Activated B cell treated with CpG ODN at 0.5 μM for 24 hours (primary cell): ENCODE measurements at regions of chr15 and their contacts with region 1.

Region 1: DNA sequence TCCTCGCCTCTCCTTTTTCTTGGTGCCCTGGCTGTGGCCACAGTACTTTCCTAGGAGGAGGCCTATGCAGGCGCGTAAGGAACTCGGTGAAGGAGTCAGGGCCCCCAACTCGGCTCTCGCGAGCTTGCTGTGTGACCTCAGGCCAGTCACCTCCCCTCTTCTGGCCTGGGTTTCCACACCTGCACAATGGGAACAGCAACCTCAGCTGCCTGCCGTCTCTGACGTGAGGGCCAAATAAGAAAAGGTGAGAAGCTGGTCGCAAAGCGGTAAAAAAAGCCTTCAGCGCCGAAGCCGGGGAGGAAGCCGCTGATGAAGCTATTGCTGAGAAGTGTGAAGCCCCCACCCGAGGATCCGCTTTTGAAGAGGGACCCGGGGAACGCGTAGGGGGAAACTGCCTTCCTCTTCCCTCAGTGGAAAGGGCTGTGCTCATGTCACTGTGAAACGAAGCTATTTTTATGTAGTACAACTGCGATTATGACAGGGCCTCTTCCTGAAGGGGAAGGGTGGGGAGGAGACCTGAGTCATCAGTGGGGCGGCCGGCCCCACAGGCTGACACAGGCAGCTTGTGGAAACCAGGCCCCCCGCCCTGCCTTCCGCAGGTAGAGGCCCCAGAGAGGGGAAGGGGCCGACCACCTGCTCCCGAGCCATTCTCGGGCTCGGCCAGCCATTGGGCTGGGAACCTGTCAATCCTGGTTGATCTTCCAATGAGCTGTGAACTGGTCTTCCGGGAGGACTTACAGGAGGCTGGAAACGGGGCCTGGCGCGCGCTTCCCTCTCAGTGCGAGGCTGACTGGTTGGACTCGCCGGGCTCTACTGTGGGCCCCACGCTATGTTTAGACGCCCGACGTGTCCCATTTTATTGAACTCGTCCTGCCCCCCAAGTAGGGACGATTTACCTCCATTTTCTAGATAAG is 18.0 kb upstream of the ANKDD1A start:
- DNase-seq: peak; percentile 90
- ATAC-seq: peak; percentile 72
- H3K4me3 Mint-ChIP-seq: peak overlapping the region; percentile 89
- H3K27ac Mint-ChIP-seq: peak overlapping the region; percentile 99
- H3K4me1 Mint-ChIP-seq: peaks cover 76% of the 10 kb centered on the region
- H3K27me3 Mint-ChIP-seq: no peaks in the 10 kb centered on the region
- CTCF ChIP-seq: no peak

Region 2: DNA sequence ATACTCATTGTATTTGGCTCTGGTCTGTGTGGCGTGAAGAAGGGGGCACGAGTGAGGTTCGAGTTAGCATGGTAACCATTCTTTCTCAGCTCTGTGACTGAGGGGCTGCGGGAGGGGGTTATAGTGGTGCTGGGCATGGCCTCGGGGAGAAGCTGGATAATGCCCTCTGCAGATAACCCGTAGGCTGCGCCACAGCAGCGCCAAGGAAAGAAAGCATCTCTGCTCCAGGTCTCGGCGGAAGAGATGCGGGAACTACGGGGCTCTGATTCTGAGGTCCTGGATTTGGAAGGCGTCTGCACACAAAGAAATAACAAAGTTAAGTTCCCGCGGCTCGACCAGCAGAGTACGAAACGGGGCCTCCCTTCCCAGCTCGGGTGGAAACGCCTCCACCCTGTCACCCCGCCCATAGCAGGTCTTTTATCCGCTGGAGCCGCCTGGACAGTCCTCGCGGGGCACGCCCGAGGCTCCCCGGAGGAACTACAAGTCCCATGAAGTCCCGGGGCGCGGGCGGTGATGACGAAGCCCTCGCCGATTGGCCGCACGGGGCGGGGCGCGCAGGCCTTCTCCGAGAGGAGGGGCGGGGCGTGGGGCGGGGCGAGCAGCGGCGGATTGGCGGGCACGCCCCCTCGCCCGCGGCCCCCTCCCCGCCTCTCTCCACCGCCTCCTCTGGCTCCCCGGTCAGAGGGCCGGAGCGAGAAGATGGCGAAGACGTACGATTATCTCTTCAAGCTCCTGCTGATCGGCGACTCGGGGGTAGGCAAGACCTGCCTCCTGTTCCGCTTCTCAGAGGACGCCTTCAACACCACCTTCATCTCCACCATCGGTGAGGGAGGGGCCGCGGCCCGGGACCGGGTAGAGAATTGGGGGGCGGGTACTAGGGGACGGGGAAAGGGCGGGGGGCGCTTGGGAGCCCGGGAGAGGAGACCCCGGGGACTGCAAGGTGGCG is 1704.5 kb before region 1 on chr15 and contains the start of gene RAB8B:
- CTCF ChIA-PET with region 1: no interaction called
- POLR2A ChIA-PET with region 1: no interaction called
- intact Hi-C with region 1: loop called (anchors 10 kb)
- DNase-seq: peak; percentile 93
- ATAC-seq: peak; percentile 83
- H3K4me3 Mint-ChIP-seq: peak within 1 kb of the TSS; percentile 96
- H3K27ac Mint-ChIP-seq: peak within 1 kb of the TSS; percentile 95
- H3K4me1 Mint-ChIP-seq: peaks cover 57% of the 10 kb centered on the region
- H3K27me3 Mint-ChIP-seq: no peaks in the 10 kb centered on the region
- CTCF ChIP-seq: no peak
- total RNA-seq, gene RAB8B: 93.1 and 94.4 TPM in 2 replicates

Region 3: GRCh38 chr15:64619880-64620839 is 273.6 kb before region 1 on chr15:
- CTCF ChIA-PET with region 1: no interaction called
- POLR2A ChIA-PET with region 1: no interaction called
- intact Hi-C with region 1: no loop called
- DNase-seq: no peak
- ATAC-seq: no peak
- H3K4me3 Mint-ChIP-seq: no peak overlapping the region
- H3K27ac Mint-ChIP-seq: peak overlapping the region; percentile 74
- H3K4me1 Mint-ChIP-seq: peaks cover 55% of the 10 kb centered on the region
- H3K27me3 Mint-ChIP-seq: no peaks in the 10 kb centered on the region
- CTCF ChIP-seq: no peak

Region 4: DNA sequence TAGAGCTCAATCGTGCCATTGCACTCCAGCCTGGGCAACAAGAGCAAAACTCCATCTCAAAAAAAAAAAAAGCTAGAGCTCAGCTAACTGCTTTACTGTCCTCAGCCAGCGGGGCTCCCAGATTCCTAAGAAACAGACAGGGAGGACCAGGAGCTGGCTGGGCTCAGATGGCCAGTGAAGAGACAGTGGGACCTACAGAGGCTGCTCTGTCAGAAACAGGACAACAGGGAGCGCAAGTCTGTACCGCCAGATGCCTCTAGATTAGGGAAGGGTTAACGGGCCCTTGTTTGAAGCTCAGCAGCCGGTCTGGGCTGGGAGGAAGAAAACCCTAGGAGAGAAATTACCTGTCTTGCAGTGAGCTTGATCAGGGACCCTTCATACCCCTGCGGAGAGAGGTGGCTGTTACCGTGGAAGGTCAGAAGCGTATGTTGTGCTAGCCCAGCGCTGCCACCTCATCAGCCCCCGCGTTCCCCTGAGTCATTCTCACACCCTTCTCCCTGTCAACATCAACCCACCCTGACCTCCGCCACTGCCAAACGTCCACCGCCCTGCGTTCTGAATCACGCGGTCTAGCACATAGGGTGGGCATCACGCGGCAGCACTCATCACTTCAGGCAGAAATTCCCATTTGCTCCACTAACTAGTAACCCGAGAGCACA is 143.6 kb before region 1 on chr15:
- CTCF ChIA-PET with region 1: no interaction called
- POLR2A ChIA-PET with region 1: interaction called, 5 read pairs
- intact Hi-C with region 1: loop called (anchors 5 kb)
- DNase-seq: no peak
- ATAC-seq: no peak
- H3K4me3 Mint-ChIP-seq: no peak overlapping the region
- H3K27ac Mint-ChIP-seq: no peak overlapping the region
- H3K4me1 Mint-ChIP-seq: peaks cover 30% of the 10 kb centered on the region
- H3K27me3 Mint-ChIP-seq: no peaks in the 10 kb centered on the region
- CTCF ChIP-seq: no peak

Region 5: DNA sequence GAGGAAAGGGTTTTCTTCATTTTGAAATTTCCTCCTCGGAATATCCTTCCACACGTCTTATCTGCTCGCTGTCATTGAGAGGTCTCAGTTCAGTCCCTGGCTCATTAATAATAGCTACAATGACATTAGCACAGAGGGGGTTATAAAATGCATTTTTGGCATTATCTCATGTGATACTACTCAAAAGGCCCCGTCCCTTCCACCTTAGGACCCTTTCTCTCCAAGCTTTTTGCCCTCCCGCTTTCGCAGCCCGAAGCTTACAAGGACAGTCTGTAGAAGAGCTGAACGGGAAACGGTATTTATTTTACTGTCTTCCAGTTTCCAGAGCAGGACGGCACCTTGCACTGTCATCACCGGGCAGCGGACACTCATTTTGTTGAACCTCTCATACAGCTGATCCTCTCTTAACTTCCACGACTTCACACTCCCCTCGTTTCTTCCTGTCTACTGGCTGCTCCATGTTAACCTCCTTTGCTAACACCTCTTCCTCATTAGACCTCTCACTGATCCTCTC is 57.7 kb before region 1 on chr15:
- CTCF ChIA-PET with region 1: interaction called, 30 read pairs
- POLR2A ChIA-PET with region 1: interaction called, 138 read pairs
- intact Hi-C with region 1: loop called (anchors 1 kb)
- DNase-seq: no peak
- ATAC-seq: no peak
- H3K4me3 Mint-ChIP-seq: peak overlapping the region; percentile 60
- H3K27ac Mint-ChIP-seq: peak overlapping the region; percentile 50
- H3K4me1 Mint-ChIP-seq: peaks cover 23% of the 10 kb centered on the region
- H3K27me3 Mint-ChIP-seq: no peaks in the 10 kb centered on the region
- CTCF ChIP-seq: no peak

Region 6: GRCh38 chr15:64865998-64866520 is 27.7 kb before region 1 on chr15:
- CTCF ChIA-PET with region 1: interaction called, 17 read pairs
- POLR2A ChIA-PET with region 1: interaction called, 42 read pairs
- intact Hi-C with region 1: loop called (anchors 1 kb)
- DNase-seq: no peak
- ATAC-seq: no peak
- H3K4me3 Mint-ChIP-seq: no peak overlapping the region
- H3K27ac Mint-ChIP-seq: no peak overlapping the region
- H3K4me1 Mint-ChIP-seq: peaks cover 44% of the 10 kb centered on the region
- H3K27me3 Mint-ChIP-seq: no peaks in the 10 kb centered on the region
- CTCF ChIP-seq: no peak

Region 7: GRCh38 chr15:64912379-64913325 is 18.9 kb after region 1 on chr15:
- CTCF ChIA-PET with region 1: no interaction called
- POLR2A ChIA-PET with region 1: no interaction called
- intact Hi-C with region 1: no loop called
- DNase-seq: no peak
- ATAC-seq: no peak
- H3K4me3 Mint-ChIP-seq: peak overlapping the region; percentile 38
- H3K27ac Mint-ChIP-seq: no peak overlapping the region
- H3K4me1 Mint-ChIP-seq: peaks cover 7% of the 10 kb centered on the region
- H3K27me3 Mint-ChIP-seq: peaks cover 11% of the 10 kb centered on the region
- CTCF ChIP-seq: no peak

Region 8: GRCh38 chr15:65171429-65171828 is 277.7 kb after region 1 on chr15:
- CTCF ChIA-PET with region 1: no interaction called
- POLR2A ChIA-PET with region 1: no interaction called
- intact Hi-C with region 1: no loop called
- DNase-seq: no peak
- ATAC-seq: no peak
- H3K4me3 Mint-ChIP-seq: no peak overlapping the region
- H3K27ac Mint-ChIP-seq: no peak overlapping the region
- H3K4me1 Mint-ChIP-seq: peaks cover 14% of the 10 kb centered on the region
- H3K27me3 Mint-ChIP-seq: no peaks in the 10 kb centered on the region
- CTCF ChIP-seq: no peak

Region 9: DNA sequence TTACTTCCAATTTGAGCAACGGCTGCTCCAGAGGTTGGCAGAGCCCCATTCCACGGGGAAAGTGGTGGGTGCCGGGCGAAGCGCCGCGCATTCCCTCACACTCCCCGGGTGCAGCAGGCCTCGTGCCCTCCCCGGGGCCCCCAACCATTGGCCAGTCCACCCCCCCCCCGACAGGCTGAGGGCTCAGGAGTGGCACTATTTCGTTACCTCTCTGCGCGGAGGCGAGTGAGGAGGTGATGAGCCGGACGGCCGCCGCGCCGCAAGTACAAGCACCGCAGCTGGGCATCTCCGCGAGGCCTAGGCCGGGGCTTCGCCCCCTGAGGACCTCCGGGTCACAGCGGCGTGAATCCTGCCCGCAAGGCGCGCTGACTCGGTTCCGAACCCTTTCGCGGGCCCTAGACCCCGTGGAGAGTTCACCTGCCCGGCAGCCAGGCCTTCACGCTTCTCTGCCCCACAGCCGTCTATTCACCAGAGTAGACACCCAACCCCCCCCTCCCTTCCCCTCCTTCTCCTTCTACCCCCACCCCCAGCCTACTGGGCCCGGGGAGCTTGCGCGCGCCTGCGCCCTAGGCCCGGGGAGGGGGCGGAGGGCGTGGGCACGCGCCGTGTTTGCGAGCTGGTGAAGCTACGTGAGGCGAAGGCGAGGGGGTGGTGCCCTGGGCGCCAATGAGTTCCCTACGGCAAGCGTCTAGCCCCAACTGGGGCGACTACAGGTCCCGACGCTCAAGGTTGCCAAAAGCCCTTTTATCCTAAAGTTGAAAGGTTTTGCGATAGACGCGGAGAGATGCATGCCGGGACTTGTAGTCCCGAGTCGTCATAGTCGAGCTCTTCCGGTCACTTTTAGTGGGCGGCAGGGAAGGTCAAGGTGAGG is 291.4 kb after region 1 on chr15 and contains the start of gene CLPX:
- CTCF ChIA-PET with region 1: no interaction called
- POLR2A ChIA-PET with region 1: interaction called, 14 read pairs
- intact Hi-C with region 1: no loop called
- DNase-seq: peak; percentile 87
- ATAC-seq: peak; percentile 88
- H3K4me3 Mint-ChIP-seq: peak within 1 kb of the TSS; percentile 93
- H3K27ac Mint-ChIP-seq: peak within 1 kb of the TSS; percentile 89
- H3K4me1 Mint-ChIP-seq: peaks cover 26% of the 10 kb centered on the region
- H3K27me3 Mint-ChIP-seq: no peaks in the 10 kb centered on the region
- CTCF ChIP-seq: no peak
- total RNA-seq, gene CLPX: 52.2 and 53.5 TPM in 2 replicates